Heart left ventricle (tissue), 16 donors: ENCODE measurements at regions of chr9 and their contacts with region 1.

Region 1: DNA sequence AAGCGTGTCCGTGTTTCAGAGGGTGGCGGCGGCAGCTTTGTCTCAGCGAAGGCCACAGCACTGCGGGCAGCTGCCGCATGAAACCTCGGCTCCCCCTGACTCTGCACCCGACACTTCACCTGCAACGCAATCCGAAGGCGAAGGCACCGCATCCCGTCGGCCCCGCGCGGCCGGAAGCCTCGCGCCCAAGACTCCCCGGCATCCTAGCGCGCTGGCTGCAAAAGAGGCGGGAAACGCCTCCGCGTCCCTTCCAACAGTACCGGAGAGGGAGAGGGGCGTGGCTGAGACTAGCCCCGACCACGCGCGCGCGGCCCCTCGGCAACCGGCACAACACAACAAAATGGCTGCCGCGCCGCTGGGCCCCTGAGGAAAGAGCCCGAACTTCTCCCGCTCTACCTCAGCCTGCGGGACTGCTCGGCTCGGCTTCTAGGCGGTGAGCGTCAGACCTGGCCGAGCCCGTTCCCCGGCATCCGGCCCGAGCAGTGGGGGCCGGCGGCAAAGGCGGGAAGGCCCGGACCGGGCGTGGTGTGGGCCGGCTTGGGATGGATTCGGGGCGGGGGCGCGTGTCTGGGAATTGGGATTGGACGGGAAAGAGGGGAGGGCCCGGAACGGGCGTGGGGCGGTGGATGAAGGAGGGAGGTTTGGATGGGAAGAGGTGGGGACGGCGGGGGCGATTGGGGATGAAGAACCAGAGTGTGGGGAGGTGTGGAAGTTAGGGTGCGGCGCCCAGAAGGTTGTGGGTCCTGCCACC is at the start of gene CNTRL:
- DNase-seq: peak; percentile 91 to 94 (median 92)
- ATAC-seq: peak; percentile 90 to 96 (median 94)
- H3K4me3 ChIP-seq: peak within 1 kb of the TSS; percentile 48 to 91 (median 74)
- H3K27ac ChIP-seq: peak within 1 kb of the TSS; percentile 39 to 92 (median 85)
- H3K4me1 ChIP-seq: peaks cover 0 to 38% (median 14%) of the 10 kb centered on the region in 12 donors
- H3K27me3 ChIP-seq: no peaks in the 10 kb centered on the region
- CTCF ChIP-seq: no peak
- POLR2A ChIP-seq: no peak
- total RNA-seq, gene CNTRL: 2.5 to 11.4 (median 4.1) TPM

Region 2: DNA sequence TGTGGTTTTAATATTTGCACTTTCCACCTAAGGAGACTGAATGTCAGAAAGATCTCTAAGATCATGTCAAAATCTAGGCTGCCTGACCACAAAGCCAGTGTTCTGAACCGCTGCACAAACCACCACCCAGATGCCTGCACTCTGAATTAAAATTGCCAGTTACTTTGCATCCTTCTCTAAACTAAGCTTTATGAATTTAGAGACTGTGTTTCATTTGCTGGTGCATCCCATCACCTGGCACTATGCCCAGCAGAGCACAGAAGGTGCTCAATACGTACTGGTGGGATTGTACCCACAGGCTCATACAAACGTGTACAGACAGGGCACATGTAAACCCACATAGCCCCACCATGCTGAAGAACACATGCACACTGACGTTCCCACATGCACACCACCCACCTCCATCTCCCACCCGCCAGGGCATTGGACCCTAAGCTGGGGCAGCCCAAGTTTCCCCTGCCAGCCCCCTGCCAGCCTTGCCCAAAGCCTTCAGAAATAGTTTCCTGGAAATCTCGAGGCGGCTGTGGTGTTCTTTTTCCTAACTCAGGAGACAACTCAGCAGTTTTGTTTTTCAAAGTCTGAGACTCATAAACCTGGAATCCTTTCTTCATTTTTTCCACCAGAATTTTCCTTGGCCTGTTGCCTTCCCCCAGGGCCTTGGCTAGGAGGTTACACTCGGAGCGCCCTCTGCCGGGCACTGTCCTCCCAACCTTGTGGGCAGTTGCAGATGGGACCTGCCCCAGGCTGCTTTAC is 138.6 kb before region 1 on chr9:
- intact Hi-C with region 1: no loop called
- DNase-seq: peak; percentile 93 to 96 (median 93)
- ATAC-seq: peak; percentile 73 to 88 (median 79)
- H3K4me3 ChIP-seq: peak overlapping the region in 2 of 12 donors; percentile 6 to 23
- H3K27ac ChIP-seq: peak overlapping the region; percentile 47 to 98 (median 72)
- H3K4me1 ChIP-seq: peaks cover 5 to 60% (median 39%) of the 10 kb centered on the region in 12 donors
- H3K27me3 ChIP-seq: no peaks in the 10 kb centered on the region
- CTCF ChIP-seq: peak; percentile 84 to 97 (median 93)
- POLR2A ChIP-seq: no peak

Region 3: GRCh38 chr9:120985810-120986222 is 89.0 kb before region 1 on chr9:
- intact Hi-C with region 1: loop called in 1 of 10 experiments (anchors 5 kb)
- DNase-seq: peak in 1 of 5 donors; percentile 9
- ATAC-seq: peak; percentile 41 to 73 (median 64)
- H3K4me3 ChIP-seq: no peak overlapping the region
- H3K27ac ChIP-seq: no peak overlapping the region
- H3K4me1 ChIP-seq: peaks cover 0 to 9% (median 0%) of the 10 kb centered on the region in 12 donors
- H3K27me3 ChIP-seq: no peaks in the 10 kb centered on the region
- CTCF ChIP-seq: peak in 11 of 12 donors; percentile 27 to 56 (median 50)
- POLR2A ChIP-seq: no peak

Region 4: GRCh38 chr9:121023064-121023463 is 51.7 kb before region 1 on chr9:
- intact Hi-C with region 1: no loop called
- DNase-seq: no peak
- ATAC-seq: no peak
- H3K4me3 ChIP-seq: no peak overlapping the region
- H3K27ac ChIP-seq: no peak overlapping the region
- H3K4me1 ChIP-seq: no peaks in the 10 kb centered on the region
- H3K27me3 ChIP-seq: no peaks in the 10 kb centered on the region
- CTCF ChIP-seq: no peak
- POLR2A ChIP-seq: no peak

Region 5: DNA sequence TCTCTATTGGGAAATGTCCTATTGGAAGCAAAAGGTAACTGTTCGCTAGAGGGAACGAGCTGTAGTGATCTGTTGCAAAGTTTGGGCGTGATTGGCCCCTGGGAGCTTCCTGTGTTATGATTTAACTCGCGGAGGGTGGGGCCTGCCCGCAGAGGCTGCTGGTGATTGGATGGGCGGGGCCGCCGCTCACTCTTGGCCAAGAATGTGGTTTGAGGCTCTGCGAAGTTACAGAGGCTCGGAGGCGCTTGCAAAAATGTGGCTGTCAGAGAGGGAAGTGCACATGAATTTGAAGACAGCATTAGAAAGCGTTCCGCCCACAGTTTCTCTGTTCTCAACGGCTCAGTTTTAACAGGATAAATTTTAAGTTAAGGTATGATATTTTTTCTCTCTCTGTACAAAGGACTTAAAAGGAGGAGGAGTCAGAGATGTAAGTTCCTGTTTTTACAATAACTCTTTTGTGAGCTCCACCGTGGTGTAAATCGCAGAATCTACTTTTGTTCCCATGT is 46.8 kb after region 1 on chr9:
- intact Hi-C with region 1: loop called in 4 of 10 experiments (anchors 2 to 5 kb)
- DNase-seq: peak; percentile 96 to 99 (median 97)
- ATAC-seq: peak; percentile 100
- H3K4me3 ChIP-seq: peak overlapping the region; percentile 2 to 66 (median 54)
- H3K27ac ChIP-seq: peak overlapping the region in 11 of 12 donors; percentile 7 to 83 (median 64)
- H3K4me1 ChIP-seq: peaks cover 0 to 41% (median 10%) of the 10 kb centered on the region in 12 donors
- H3K27me3 ChIP-seq: no peaks in the 10 kb centered on the region
- CTCF ChIP-seq: peak in 10 of 12 donors; percentile 6 to 54 (median 33)
- POLR2A ChIP-seq: peak in 1 of 2 donors; percentile 65